ENCODE measurements at regions of chr15 and their contacts with region 1.

Region 1: DNA sequence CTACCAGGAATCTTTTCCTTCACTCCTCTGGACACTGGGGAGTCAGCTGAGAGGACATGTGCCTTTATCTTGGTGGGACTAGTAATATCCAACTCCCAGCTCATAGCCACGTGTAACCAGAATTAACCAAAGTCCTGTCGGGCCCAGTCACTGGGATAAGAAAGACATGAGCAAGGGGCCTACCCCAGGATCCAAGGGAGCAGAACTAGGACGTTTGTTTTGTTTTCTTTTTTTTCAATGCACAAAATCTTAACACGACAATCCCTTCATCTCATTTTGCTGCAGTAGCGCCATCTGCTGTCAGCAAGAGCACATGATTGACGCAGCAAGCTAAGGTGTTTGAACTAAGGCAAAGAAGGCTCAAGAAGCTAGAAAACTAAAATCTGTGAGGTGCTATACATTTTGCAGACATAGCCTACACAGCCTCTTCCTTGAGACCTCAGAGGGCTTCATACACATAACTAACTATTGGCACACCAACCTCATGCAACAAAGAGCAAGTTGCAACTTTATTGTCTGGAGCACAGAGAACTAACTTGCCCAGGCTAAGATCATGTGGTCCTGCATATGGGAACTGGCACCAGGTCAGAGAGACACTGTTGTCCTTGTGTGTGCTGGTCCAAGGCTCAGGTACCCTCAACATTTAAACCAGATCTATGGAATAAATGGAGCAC is 43.6 kb downstream of the RLBP1 start:
- DNase-seq: no peak
- ATAC-seq: peak; percentile 36

Region 2: GRCh38 chr15:88897456-88898194 is 280.1 kb before region 1 on chr15:
- intact Hi-C with region 1: loop called (anchors 5 kb)
- DNase-seq: peak; percentile 93
- ATAC-seq: peak; percentile 92

Region 3: DNA sequence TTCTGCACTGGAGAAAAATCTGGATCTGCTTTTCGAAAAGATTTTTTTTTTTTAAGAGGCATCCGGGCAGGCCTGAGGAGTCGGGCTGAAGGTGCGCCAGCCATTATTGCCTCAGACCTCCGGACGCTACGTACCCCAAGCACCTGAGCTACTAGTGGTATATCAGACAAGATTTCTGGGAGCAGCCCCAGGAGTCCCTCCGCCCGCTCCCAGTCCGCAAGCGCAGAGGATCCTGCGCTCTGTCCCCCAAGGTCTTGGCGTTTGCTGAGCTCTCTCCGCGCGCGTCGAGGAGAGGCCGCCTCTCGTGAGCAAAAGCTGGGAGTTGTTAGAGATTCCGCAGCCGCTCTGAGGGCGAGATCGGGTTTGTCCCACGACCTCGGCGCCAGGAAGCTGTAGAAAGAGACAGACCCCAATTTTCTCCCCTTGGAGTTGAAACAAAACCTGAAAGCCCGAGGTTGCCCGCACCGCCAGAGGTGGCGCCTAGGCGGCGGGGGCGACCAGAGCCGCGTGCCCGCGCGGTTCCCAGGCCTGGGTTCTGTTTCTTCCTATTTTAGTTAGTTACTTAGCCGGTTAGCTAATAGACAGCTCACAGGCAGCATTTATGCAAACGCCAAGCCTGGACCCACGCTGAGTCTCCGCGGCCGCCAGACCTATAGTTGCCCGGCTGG is 229.3 kb after region 1 on chr15:
- intact Hi-C with region 1: no loop called
- DNase-seq: no peak
- ATAC-seq: no peak

Measured in Right ventricle myocardium inferior (tissue), 1 donor.